Heart left ventricle (tissue), 16 donors: ENCODE measurements at regions of chr11 and their contacts with region 1.

Region 1: GRCh38 chr11:126310228-126310991 is 6.5 kb downstream of the DCPS start:
- DNase-seq: peak; percentile 78 to 89 (median 81)
- ATAC-seq: peak; percentile 84 to 95 (median 94)
- H3K4me3 ChIP-seq: no peak overlapping the region
- H3K27ac ChIP-seq: peak overlapping the region in 3 of 12 donors; percentile 7 to 16 (median 11)
- H3K4me1 ChIP-seq: peaks cover 0 to 27% (median 7%) of the 10 kb centered on the region in 12 donors
- H3K27me3 ChIP-seq: no peaks in the 10 kb centered on the region
- CTCF ChIP-seq: peak; percentile 84 to 95 (median 89)
- POLR2A ChIP-seq: no peak

Region 2: GRCh38 chr11:126345759-126346585 is 35.6 kb after region 1 on chr11:
- intact Hi-C with region 1: loop called in 1 of 10 experiments (anchors 5 kb)
- DNase-seq: peak in 3 of 5 donors; percentile 66 to 75 (median 68)
- ATAC-seq: peak in 3 of 4 donors; percentile 28 to 71 (median 54)
- H3K4me3 ChIP-seq: no peak overlapping the region
- H3K27ac ChIP-seq: peak overlapping the region; percentile 46 to 88 (median 64)
- H3K4me1 ChIP-seq: peaks cover 13 to 70% (median 55%) of the 10 kb centered on the region in 12 donors
- H3K27me3 ChIP-seq: no peaks in the 10 kb centered on the region
- CTCF ChIP-seq: no peak
- POLR2A ChIP-seq: peak in 1 of 2 donors; percentile 0

Region 3: GRCh38 chr11:126366065-126366785 is 55.8 kb after region 1 on chr11:
- intact Hi-C with region 1: no loop called
- DNase-seq: peak in 1 of 5 donors; percentile 52
- ATAC-seq: peak in 3 of 4 donors; percentile 44 to 52 (median 45)
- H3K4me3 ChIP-seq: peak overlapping the region in 1 of 12 donors; percentile 21
- H3K27ac ChIP-seq: peak overlapping the region in 9 of 12 donors; percentile 21 to 73 (median 56)
- H3K4me1 ChIP-seq: peaks cover 0 to 73% (median 35%) of the 10 kb centered on the region in 12 donors
- H3K27me3 ChIP-seq: no peaks in the 10 kb centered on the region
- CTCF ChIP-seq: no peak
- POLR2A ChIP-seq: no peak

Region 4: DNA sequence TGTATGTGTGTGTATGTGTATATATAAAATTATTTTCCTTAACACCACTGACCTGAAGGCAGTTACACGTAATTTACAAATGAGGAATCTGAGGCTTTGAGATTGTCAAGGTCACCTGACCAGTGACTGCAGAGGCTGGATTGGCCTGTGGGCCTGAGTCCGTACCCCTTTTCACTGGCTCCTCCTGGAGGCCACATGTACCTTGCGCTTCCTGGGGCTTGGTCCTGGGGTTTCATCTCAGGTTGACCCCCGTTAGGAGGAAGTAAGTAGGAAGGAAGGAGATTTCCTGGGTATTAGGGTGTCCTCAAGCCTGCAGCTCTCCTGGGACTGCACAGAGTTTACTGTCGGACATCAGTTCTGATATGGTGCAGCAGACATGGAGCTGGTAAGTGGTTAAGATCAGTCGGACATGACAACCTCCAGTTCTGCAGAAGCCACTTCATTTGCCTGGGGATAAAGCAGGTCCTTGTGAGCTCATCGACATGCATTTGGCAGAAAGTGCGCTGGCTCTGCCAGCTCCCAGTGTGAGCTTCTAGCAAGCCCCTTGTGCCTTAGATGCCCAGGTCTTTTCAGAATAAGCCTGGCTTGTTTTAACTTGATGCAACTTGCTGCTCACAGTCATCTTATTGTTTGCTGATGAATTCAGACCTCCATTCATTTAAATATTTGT is 81.7 kb after region 1 on chr11:
- intact Hi-C with region 1: loop called in 2 of 10 experiments (anchors 2 to 5 kb)
- DNase-seq: peak in 3 of 5 donors; percentile 54 to 74 (median 68)
- ATAC-seq: peak; percentile 29 to 70 (median 54)
- H3K4me3 ChIP-seq: no peak overlapping the region
- H3K27ac ChIP-seq: peak overlapping the region; percentile 47 to 93 (median 74)
- H3K4me1 ChIP-seq: peaks cover 12 to 74% (median 49%) of the 10 kb centered on the region in 12 donors
- H3K27me3 ChIP-seq: no peaks in the 10 kb centered on the region
- CTCF ChIP-seq: peak in 7 of 12 donors; percentile 14 to 53 (median 28)
- POLR2A ChIP-seq: no peak

Region 5: GRCh38 chr11:126431401-126432064 is 121.1 kb after region 1 on chr11:
- intact Hi-C with region 1: loop called in 8 of 10 experiments (anchors 2 to 10 kb)
- DNase-seq: peak in 4 of 5 donors; percentile 57 to 85 (median 71)
- ATAC-seq: peak; percentile 60 to 86 (median 78)
- H3K4me3 ChIP-seq: no peak overlapping the region
- H3K27ac ChIP-seq: peak overlapping the region; percentile 12 to 86 (median 70)
- H3K4me1 ChIP-seq: peaks cover 3 to 61% (median 22%) of the 10 kb centered on the region in 12 donors
- H3K27me3 ChIP-seq: no peaks in the 10 kb centered on the region
- CTCF ChIP-seq: no peak
- POLR2A ChIP-seq: no peak

Region 6: GRCh38 chr11:126480410-126481302 is 170.2 kb after region 1 on chr11:
- intact Hi-C with region 1: loop called (anchors 1 to 5 kb)
- DNase-seq: peak; percentile 80 to 89 (median 82)
- ATAC-seq: peak; percentile 69 to 89 (median 87)
- H3K4me3 ChIP-seq: peak overlapping the region in 5 of 12 donors; percentile 9 to 37 (median 15)
- H3K27ac ChIP-seq: peak overlapping the region in 9 of 12 donors; percentile 12 to 78 (median 56)
- H3K4me1 ChIP-seq: peaks cover 0 to 12% (median 1%) of the 10 kb centered on the region in 12 donors
- H3K27me3 ChIP-seq: no peaks in the 10 kb centered on the region
- CTCF ChIP-seq: peak; percentile 89 to 98 (median 93)
- POLR2A ChIP-seq: no peak

Region 7: GRCh38 chr11:127345819-127346459 is 1035.5 kb after region 1 on chr11:
- intact Hi-C with region 1: loop called in 3 of 10 experiments (anchors 10 kb)
- DNase-seq: peak in 3 of 5 donors; percentile 7 to 32 (median 19)
- ATAC-seq: no peak
- H3K4me3 ChIP-seq: peak overlapping the region in 1 of 12 donors; percentile 1
- H3K27ac ChIP-seq: no peak overlapping the region
- H3K4me1 ChIP-seq: no peaks in the 10 kb centered on the region
- H3K27me3 ChIP-seq: peaks cover 0 to 4% (median 0%) of the 10 kb centered on the region in 9 donors
- CTCF ChIP-seq: peak; percentile 55 to 82 (median 74)
- POLR2A ChIP-seq: no peak